A549 (cell line): ENCODE measurements at regions of chr21 and their contacts with region 1.

Region 1: GRCh38 chr21:27001526-27001925 is 34.6 kb upstream of the ADAMTS5 start:
- DNase-seq: no peak
- ATAC-seq: no peak
- H3K4me3 ChIP-seq: no peak overlapping the region
- H3K27ac ChIP-seq: no peak overlapping the region
- H3K4me1 ChIP-seq: no peaks in the 10 kb centered on the region
- CTCF ChIP-seq: no peak
- EP300 ChIP-seq: no peak
- POLR2A ChIP-seq: no peak
- RAD21 ChIP-seq: no peak

Region 2: DNA sequence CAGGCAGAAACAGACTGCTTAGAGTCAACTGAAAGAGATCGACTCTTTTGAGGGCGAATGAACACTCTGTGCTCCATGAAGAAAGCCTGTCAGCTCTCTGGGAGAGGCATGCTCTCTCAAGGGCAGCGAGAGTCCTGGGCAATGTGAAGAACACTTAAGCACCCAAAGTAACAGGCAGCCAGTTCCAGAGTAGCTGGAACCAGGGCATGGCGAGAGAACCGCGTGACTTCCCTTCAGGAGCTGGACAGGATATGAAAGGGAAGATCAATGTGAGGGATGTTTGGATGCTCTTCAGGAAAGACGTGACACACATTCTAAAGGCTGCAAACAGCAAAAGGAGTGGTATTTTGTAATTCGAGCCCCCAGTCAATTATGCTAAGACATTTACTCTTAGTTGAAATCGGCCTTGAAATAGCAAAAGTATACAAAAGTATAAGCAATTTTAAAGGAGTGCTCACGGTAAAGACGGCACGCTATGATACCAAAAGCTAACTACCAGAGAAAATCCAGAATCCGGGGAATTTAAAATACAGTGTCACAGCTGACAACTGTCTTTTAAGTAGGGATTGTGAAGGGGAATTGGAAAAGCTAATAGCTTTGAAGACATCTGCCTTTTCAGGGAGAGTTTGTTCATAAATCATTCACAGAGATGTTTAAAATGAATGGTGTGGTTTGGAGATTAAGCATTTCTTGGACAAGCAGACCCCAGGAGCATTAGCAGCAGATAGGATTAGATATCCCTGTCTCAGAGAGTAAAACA is 55.4 kb before region 1 on chr21:
- CTCF ChIA-PET with region 1: no interaction called
- POLR2A ChIA-PET with region 1: interaction called, 10 read pairs
- DNase-seq: no peak
- ATAC-seq: no peak
- H3K4me3 ChIP-seq: no peak overlapping the region
- H3K27ac ChIP-seq: no peak overlapping the region
- H3K4me1 ChIP-seq: no peaks in the 10 kb centered on the region
- CTCF ChIP-seq: no peak
- EP300 ChIP-seq: no peak
- POLR2A ChIP-seq: no peak
- RAD21 ChIP-seq: no peak

Region 3: DNA sequence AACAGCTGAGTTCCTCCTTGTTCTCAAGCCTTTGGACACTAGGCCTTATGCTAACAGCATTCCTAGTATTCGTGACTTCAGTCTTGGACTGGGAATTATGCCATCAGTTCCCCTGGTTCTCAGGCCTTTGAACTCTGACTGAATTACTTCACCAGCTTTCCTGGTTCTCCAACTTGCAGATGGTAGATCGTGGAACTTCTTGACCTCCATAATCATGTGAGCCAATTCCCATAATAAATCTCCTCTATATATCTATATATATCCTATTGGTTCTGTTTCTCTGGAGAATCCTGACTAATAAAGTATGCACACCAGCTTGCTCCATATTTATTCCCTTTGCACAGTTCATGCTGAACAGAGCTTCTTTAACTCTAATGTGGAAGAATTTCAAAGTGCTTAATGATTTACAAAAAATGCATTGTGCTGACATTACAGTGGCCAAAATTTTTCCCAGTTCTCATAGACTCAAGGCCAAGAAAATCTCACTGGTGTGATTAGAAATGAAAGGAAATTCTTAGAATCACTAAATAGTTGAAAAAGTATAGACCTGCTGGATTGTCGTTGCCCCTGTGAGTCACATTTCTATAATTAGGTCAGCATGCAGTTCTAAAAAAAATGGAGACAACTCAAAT is 428.3 kb after region 1 on chr21:
- CTCF ChIA-PET with region 1: no interaction called
- POLR2A ChIA-PET with region 1: no interaction called
- DNase-seq: no peak
- ATAC-seq: no peak
- H3K4me3 ChIP-seq: no peak overlapping the region
- H3K27ac ChIP-seq: no peak overlapping the region
- H3K4me1 ChIP-seq: no peaks in the 10 kb centered on the region
- CTCF ChIP-seq: no peak
- EP300 ChIP-seq: no peak
- POLR2A ChIP-seq: no peak
- RAD21 ChIP-seq: no peak